IMR-90 (cell line): ENCODE measurements at regions of chr2 and their contacts with region 1.

Region 1: DNA sequence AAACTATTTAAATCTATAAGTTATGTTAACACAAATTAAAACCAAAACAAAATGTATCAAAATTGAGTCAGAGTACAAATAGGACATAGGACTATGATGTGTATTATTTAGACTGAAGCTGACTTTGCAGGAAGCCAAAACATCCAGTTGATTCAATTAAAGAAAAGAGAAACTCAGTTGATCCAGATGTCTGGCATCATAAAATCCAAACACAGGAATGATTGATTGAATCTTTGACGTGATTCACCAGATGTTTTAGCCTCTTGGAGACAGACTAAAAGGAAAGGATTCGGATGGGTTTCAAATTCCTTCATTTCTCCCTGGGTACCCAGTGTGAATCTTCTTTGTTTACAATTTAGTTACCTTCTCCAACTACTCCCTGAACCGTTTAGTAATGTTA is 272.9 kb downstream of the IRS1 start:
- DNase-seq: peak; percentile 68
- ATAC-seq: peak; percentile 33
- H3K4me3 ChIP-seq: no peak overlapping the region
- H3K27ac ChIP-seq: peak overlapping the region; percentile 28; the same call in 1 of the 2 replicates
- H3K4me1 ChIP-seq: peaks cover 11% of the 10 kb centered on the region
- H3K27me3 ChIP-seq: no peaks in the 10 kb centered on the region
- CTCF ChIP-seq: no peak
- POLR2A ChIP-seq: no peak
- RAD21 ChIP-seq: no peak

Region 2: DNA sequence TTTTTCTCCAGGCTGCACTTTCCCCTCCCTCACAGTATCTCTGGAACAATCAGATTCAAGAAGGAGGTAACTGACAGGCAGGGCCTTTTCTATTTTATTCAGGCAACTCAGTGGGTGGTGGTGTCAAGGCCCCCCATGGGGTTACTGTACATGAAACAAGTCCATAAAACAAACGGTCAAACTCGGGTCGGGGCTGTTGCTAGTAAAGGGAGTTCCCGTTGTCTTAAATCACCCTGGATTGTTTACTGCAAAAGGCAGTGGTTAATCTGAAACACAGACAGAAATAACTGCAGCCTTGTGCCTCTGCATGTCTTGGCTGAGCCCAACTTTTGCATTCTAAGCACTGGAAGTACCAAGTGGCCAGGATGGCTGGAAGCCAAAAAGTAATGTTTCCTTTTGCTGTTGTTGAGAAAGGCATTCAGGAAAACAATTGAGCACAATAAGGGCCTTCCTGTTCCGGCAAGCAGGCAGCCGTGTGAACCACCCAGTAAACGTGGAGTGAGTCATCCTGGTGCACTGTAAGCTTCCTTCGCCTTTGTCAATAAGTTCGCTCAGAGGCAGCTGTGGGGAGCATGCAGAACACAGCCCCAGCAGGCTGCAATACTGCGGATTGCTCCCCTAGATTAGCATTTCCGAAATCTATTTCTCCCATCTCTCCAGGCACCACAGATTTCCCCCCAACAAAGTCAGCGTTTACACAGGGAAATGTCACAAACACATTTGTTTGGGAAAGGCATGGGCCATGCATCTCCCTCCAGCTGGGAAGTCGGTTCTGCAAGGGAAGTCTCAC is 123.3 kb after region 1 on chr2:
- CTCF ChIA-PET with region 1: no interaction called
- POLR2A ChIA-PET with region 1: no interaction called
- dilution Hi-C with region 1: no loop called
- in situ Hi-C with region 1: no loop called
- intact Hi-C with region 1: loop called (anchors 5 kb)
- DNase-seq: peak; percentile 98
- ATAC-seq: peak; percentile 91
- H3K4me3 ChIP-seq: no peak overlapping the region
- H3K27ac ChIP-seq: peak overlapping the region; percentile 66
- H3K4me1 ChIP-seq: peaks cover 23% of the 10 kb centered on the region
- H3K27me3 ChIP-seq: no peaks in the 10 kb centered on the region
- CTCF ChIP-seq: no peak
- POLR2A ChIP-seq: peak; percentile 42; the same call in 1 of the 2 replicates
- RAD21 ChIP-seq: peak; percentile 16

Region 3: GRCh38 chr2:227406177-227407031 is 879.7 kb after region 1 on chr2:
- CTCF ChIA-PET with region 1: no interaction called
- POLR2A ChIA-PET with region 1: no interaction called
- dilution Hi-C with region 1: no loop called
- in situ Hi-C with region 1: no loop called
- intact Hi-C with region 1: no loop called
- DNase-seq: peak; percentile 99
- ATAC-seq: peak; percentile 91
- H3K4me3 ChIP-seq: no peak overlapping the region
- H3K27ac ChIP-seq: peak overlapping the region; percentile 77
- H3K4me1 ChIP-seq: peaks cover 1% of the 10 kb centered on the region; the same call in 1 of the 2 replicates
- H3K27me3 ChIP-seq: no peaks in the 10 kb centered on the region
- CTCF ChIP-seq: peak; percentile 96
- POLR2A ChIP-seq: no peak
- RAD21 ChIP-seq: peak; percentile 95